ENCODE measurements at regions of chr20 and their contacts with region 1.

Region 1: DNA sequence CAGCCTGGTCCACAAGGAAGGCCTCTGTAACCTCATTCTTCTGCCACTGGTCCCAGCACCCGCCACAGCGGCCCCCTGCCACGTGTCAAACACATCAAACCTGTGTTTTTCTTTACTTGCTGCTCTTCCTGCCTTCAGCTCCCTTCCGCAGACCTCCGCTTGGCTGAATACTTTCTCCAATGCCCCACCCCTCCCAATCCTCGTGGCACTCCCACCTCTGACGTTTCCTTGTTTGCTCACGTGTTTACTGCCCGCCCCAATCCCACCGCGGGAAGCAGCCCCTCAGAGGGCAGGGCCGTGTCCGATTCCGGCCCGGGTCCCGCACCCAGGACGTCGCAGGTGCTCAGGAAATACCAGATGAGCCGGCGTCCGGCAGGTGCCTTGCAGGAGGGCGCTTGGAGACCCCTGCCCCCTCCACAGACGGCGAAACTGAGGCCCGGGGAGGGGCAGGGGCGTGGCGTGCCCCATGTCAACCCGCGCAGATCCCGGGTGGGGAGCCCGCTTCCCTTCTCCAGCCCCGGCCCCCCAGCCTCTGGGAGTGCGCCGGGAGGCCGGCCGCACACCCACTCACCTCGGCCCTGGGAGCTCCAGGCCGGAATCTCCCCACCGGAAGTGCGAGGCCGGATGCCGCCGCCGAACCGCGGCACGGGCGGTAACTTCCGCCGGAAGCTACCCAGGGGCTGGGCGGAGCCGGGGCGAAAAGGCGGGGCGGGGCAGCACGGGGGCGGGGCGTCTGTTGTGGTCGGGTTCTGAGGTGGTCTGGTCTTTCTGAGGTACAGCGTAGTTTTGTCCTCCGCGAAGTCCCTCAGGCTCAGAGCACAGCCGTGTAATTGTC is 42.4 kb downstream of the ELMO2 start:
- DNase-seq: peak; percentile 94
- H3K4me3 ChIP-seq: peak overlapping the region; percentile 81 to 97 (median 93)
- H3K27ac ChIP-seq: peak overlapping the region; percentile 95 to 97 (median 96)
- H3K4me1 ChIP-seq: peaks cover 0 to 45% (median 36%) of the 10 kb centered on the region in 4 donors
- H3K27me3 ChIP-seq: no peaks in the 10 kb centered on the region
- CTCF ChIP-seq: no peak
- EP300 ChIP-seq: no peak
- POLR2A ChIP-seq: peak; percentile 83 to 85

Region 2: DNA sequence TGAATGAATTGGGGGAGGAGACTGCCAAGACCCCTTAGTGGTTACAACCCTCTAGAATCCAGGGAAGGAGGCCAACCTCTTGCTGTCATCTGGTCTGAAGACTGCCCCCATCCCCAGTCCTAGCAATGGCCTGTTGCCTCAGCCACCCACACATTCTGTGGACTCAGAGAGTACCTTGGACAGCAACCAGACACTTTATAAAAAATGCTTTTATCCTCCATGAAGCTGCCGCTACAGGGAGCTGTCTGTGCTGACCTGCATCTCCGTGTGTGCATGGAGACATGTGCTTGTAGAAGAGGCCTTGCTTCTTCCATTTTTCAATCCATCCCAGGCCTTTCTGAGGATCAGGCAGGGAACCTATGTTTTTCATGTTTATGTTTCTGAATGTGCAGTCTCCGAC is 70.9 kb before region 1 on chr20:
- intact Hi-C with region 1: no loop called
- DNase-seq: no peak
- H3K4me3 ChIP-seq: no peak overlapping the region
- H3K27ac ChIP-seq: no peak overlapping the region
- H3K4me1 ChIP-seq: no peaks in the 10 kb centered on the region
- H3K27me3 ChIP-seq: peaks cover 0 to 73% (median 33%) of the 10 kb centered on the region in 3 donors
- CTCF ChIP-seq: no peak
- EP300 ChIP-seq: no peak
- POLR2A ChIP-seq: no peak

Region 3: DNA sequence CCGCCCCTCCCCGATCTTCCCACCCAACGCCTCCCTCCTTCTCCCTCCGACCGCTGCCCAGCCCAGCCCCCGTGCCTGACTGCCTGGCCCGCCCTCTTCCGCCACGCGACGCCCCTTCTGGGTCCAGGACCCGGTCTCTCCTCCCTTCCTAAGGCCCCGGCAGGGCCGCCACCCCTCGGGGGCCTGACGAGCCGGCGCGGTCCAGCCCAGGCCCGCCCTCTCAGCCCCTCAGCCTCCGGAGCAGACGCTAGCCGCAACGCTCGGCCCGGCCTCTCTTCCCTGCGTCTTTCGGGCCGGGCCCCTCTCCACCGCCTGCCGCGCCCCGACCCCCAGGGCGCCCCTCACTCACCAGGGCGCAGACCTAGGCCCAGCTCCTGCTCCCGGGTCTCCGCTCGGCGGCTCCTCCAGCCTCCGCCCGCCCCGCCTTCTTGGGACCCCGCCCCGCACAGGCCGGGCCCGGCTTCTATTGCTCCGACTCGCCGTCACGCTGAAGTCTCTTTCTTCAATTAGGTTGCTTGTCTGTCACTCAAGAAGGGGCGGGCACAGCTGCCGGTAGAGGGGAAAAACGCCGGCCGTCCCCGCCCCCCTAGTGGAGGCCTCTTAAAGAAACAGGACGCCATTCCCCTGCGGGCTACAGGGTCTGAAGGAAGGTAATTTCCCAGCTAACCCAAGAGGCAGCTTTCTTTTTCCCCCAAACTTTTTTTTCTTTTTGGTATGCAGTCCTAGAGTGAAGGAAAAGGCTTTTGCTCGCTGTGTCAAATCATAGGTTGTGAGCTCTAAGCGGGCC is 42.4 kb after region 1 on chr20 and contains the start of gene ELMO2:
- intact Hi-C with region 1: loop called (anchors 1 kb)
- DNase-seq: peak; percentile 99
- H3K4me3 ChIP-seq: peak within 1 kb of the TSS; percentile 85 to 97 (median 87)
- H3K27ac ChIP-seq: peak within 1 kb of the TSS; percentile 91 to 96 (median 94)
- H3K4me1 ChIP-seq: peaks cover 0 to 60% (median 49%) of the 10 kb centered on the region in 4 donors
- H3K27me3 ChIP-seq: no peaks in the 10 kb centered on the region
- CTCF ChIP-seq: peak in 2 of 4 experiments; percentile 9 to 31
- EP300 ChIP-seq: no peak
- POLR2A ChIP-seq: peak; percentile 27 to 58
- total RNA-seq, gene ELMO2: 40.3 to 52.1 (median 46.2) TPM